ENCODE measurements at regions of chr13 and their contacts with region 1.

Region 1: DNA sequence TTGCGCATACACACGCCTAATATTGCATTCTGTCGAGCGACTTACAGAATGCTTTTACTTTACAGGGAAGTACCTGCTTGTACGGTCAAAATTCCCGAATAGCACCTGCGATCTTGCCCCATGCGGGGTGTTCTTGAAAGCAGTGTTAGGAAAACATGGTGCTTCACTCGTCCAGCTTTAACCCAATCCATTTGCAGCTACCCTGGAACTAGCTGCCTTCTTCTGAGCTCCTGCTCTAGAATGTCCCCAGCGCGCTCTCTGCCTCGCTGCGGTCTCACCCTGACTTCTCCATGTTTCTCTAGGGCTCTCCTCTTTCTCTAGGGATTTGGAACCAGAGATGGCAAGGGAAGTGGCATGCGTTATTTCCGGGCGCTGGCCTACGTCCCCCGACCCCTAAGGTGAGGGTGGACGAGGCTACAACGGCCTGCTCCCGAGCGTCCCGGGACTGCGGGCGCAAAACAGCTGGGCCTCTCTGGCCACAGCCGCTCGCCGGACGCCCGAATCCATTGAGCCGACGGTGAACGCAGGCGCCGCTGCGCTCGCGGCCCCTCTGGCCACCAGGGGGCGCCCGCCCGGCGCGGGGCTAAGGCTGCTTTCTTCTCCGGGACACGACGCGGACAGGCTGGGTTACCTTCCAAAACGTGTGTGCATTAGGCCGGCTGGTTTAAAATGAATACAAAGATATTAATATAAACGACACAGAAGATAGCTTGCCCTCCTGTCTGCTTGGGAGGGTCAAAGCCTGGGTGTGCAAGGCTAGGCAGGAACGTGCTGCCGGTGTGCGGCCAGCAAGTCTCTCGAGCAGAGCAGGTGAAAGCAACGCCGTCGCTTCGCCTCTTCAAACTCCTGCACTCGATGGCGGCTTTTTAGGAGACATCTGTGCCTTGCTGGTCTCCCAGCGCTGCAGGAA is 1.8 kb upstream of the SPRY2 start:
- DNase-seq: peak; percentile 91

Region 2: DNA sequence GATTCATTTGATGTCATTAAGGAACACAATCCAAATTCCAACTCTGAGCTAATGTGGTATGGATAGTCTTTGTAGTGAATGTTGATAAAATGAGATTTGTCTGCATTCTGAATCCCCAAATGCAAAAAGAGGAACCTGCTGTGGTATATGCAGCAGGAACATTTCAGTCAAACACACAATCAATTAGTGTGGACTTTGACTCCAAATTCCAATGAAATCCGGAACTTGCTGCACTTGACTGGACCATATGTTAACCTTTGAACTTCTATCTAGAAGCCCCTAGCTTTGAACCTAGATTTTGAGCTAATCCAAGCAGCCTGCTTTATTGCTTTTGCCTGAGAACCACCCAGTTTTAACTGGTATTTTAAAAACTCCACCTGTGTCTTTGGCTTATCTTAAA is 343.1 kb before region 1 on chr13:
- CTCF ChIA-PET with region 1: interaction called, 13 read pairs
- POLR2A ChIA-PET with region 1: interaction called, 7 read pairs
- DNase-seq: no peak

Region 3: GRCh38 chr13:80048802-80049201 is 293.9 kb before region 1 on chr13:
- CTCF ChIA-PET with region 1: interaction called, 4 read pairs
- POLR2A ChIA-PET with region 1: interaction called, 12 read pairs
- DNase-seq: peak; percentile 78

Region 4: DNA sequence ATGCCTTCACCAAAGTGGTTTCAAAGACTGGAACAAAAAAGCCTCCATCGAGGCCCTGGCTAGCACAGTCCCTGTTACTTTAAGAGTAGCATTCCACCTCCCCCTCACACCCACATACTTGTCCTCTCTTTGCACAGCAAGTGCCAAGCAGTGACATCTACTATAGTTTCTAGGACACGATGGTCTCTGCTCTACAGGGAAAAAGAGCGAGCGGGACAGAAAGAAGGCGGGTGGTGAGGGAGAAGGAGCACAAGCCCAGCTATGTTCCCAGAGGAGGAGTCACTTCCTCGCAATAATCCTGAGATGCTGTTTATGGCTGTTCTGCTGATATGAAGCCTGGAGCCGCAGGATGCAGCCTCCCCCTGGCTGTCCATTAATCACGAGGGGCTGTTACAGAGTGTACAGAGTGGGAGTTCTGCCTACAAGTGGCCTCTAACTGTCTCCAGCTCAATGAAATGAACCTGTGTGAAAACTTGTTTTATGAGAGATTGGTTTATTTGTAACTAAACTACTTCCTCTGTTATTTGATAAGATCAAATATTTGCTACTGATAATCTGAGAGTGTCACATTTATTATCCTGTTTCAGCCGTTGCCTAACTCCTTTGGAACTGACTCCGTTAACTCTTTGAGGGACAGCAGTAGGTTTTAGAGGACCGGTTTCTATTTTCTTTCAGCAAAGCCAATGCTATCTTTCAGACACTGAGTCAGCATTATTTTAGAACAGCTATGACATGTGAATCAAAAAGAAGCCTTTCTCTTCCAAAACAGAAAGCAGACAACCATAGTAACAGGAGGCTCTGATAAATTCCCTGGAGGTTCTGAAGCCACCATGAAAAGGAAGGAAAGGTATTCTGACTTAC is 209.8 kb before region 1 on chr13:
- CTCF ChIA-PET with region 1: interaction called, 6 read pairs
- POLR2A ChIA-PET with region 1: interaction called, 25 read pairs
- DNase-seq: peak; percentile 89

Region 5: GRCh38 chr13:80151016-80151415 is 191.7 kb before region 1 on chr13:
- CTCF ChIA-PET with region 1: no interaction called
- POLR2A ChIA-PET with region 1: interaction called, 14 read pairs
- DNase-seq: no peak

Region 6: DNA sequence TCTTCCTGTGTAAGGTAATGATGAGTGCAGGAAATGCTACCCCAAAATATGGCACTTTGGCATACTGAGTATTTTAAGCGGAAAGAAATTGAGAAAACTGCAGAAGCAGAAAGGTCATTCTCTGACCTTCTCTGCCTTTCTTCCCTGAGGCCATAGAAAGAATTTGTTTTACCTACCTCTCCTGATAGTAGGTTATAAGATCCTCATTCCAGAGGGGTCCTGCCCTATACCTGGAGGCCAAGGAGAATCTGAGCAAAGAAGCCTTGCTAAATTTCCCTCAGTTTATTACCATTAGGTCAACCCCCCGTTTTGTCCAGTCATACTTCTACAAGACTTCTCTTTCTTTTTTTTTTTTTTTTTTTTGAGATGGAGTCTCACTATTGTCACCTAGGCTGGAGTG is 119.5 kb before region 1 on chr13:
- CTCF ChIA-PET with region 1: interaction called, 13 read pairs
- POLR2A ChIA-PET with region 1: interaction called, 7 read pairs
- DNase-seq: no peak

Region 7: GRCh38 chr13:80363890-80364503 is 21.3 kb after region 1 on chr13:
- CTCF ChIA-PET with region 1: interaction called, 39 read pairs
- POLR2A ChIA-PET with region 1: interaction called, 46 read pairs
- DNase-seq: peak; percentile 57

Region 8: DNA sequence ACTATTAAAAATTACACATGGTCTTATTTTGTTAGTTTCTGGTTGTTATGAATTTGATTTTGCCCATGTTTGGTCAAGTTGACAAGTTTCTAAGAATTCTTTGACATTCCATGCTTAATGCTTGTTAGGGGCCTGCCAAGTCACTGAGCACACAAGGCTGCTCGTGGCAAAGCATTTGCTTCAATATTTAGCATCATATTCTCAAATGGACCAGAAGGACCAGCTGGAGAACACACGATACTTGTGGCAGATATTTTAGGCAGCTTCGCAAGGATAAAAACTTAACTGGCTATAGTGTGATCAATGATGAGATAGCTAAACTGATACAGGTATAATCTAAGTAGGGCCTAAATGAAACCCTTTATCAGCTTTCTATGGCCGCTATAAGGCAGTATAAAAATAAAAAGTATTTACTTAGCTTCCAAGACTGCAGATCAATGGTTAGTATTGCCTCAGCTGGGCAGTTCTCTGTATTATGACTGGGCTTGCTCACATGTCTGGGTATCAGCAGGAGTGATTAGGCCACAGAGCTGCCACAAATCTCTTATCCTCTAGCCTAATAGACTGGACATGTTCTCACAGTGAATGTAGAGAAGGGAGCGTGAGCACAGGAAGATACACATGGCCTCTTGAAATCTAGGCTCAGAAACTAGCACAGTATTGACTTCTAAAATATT is 154.1 kb after region 1 on chr13:
- CTCF ChIA-PET with region 1: no interaction called
- POLR2A ChIA-PET with region 1: no interaction called
- DNase-seq: no peak

Measured in HEK293T (cell line).